ENCODE measurements at regions of chr20 and their contacts with region 1.

Region 1: DNA sequence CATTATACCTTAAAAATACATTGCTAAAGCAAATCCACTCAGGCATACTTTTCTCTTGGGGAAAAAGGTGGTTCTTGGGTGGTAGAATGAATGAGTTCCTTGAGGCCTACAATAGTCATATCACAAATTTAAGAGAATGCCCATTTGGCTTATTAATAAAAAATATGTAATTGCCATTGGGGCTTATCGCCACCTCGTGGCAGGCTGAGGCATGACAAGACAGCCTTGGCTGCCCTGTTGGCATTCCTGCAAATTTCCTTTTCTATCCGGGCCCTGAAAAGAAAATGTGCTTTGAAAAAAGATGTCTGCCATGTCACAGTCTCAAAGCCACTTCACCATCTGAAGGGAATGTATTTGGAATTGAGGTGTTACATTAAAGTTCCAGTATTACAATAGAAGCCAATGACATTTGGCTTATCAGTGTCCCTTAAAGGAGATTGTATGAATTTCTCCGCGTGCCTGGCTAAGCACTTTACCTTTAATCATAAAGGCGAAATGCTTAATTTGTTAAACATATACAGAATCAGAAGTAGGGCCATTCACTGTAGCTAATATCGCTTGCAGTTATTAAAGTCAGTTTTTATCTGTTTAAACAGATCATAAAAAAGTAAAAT is 188.3 kb upstream of the ZFP64 start:
- DNase-seq: peak in 3 of 5 donors; percentile 19 to 28 (median 23)
- H3K4me3 ChIP-seq: no peak overlapping the region
- H3K4me3 Mint-ChIP-seq: no peak overlapping the region
- H3K27ac ChIP-seq: no peak overlapping the region
- H3K27ac Mint-ChIP-seq: peak overlapping the region in 2 of 7 donors; percentile 1 to 37
- H3K4me1 ChIP-seq: peaks cover 10% of the 10 kb centered on the region
- H3K4me1 Mint-ChIP-seq: peaks cover 10 to 24% (median 13%) of the 10 kb centered on the region in 4 donors
- H3K27me3 ChIP-seq: no peaks in the 10 kb centered on the region
- H3K27me3 Mint-ChIP-seq: no peaks in the 10 kb centered on the region

Region 2: DNA sequence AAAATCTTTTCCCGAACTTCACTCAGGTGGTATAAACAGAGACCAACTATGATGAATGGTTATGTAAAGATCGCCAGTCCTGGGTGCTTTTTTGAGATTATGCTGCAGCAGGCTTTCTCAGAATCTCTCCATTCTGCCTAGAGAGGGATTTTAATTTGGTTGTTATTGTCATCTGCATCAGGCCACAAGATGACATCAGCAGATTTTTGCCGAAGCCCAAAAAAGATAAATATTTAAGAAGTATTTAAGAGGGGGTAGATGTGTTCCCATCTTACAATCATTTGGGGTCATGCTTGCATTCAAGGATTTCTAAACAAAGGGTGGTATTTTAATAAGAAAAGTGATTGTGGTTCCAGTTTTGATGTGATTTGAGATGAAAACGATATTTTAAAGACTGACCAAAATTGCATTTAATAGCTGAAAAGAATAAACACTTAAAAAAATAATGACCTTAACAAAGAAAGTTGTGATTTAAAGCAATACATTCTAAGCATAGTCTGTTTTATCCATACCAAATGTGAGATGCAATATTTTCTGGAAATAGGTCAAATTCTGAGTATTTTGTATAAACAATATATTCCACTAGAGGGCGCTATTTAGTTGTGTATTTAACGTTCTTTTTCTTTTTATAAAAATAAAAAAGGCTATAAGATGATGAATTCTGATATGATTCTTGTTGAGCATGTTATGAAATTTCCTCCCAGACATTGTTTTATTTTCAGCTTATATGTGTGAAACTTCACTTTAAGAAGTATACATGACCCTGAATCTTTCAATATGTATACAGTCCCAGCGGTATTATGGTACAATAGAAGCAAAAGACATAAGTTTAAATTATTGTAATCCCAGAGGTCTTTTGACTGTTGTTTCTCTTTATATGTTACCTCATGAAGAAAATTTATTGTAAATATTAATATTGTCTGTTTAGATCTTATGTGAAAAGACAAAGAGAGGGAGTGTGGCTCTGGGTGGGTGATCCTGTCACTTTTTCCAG is 137.3 kb before region 1 on chr20:
- CTCF ChIA-PET with region 1: no interaction called
- POLR2A ChIA-PET with region 1: no interaction called
- intact Hi-C with region 1: loop called (anchors 5 kb)
- DNase-seq: peak in 4 of 5 donors; percentile 29 to 39 (median 36)
- H3K4me3 ChIP-seq: no peak overlapping the region
- H3K4me3 Mint-ChIP-seq: no peak overlapping the region
- H3K27ac ChIP-seq: no peak overlapping the region
- H3K27ac Mint-ChIP-seq: no peak overlapping the region
- H3K4me1 ChIP-seq: no peaks in the 10 kb centered on the region
- H3K4me1 Mint-ChIP-seq: no peaks in the 10 kb centered on the region
- H3K27me3 ChIP-seq: no peaks in the 10 kb centered on the region
- H3K27me3 Mint-ChIP-seq: peaks cover 0 to 2% of the 10 kb centered on the region in 2 donors

Region 3: DNA sequence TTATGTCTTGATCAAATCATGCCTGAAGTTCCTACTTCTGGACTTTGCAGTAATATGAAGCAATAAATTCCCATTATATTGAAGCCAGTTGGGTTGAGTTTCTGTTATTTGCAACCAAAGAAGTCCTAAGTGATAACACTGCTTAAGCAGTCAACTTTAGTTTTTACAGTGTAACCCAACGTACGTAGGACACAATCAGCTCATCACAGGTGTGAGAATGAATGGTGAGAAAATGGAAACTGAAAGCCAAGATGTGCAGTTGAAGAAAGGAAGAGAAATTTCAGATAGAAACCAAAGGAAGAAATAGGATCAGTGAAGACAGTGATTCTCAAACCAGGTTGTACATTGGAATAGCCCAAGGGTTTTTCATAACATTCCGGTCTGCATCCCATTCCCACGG is 23.1 kb after region 1 on chr20:
- CTCF ChIA-PET with region 1: interaction called, 12 read pairs
- POLR2A ChIA-PET with region 1: interaction called, 5 read pairs
- intact Hi-C with region 1: no loop called
- DNase-seq: no peak
- H3K4me3 ChIP-seq: no peak overlapping the region
- H3K4me3 Mint-ChIP-seq: peak overlapping the region; percentile 2 to 74 (median 44)
- H3K27ac ChIP-seq: no peak overlapping the region
- H3K27ac Mint-ChIP-seq: peak overlapping the region; percentile 63 to 92 (median 83)
- H3K4me1 ChIP-seq: peaks cover 73% of the 10 kb centered on the region
- H3K4me1 Mint-ChIP-seq: peaks cover 57 to 82% (median 69%) of the 10 kb centered on the region in 4 donors
- H3K27me3 ChIP-seq: no peaks in the 10 kb centered on the region
- H3K27me3 Mint-ChIP-seq: no peaks in the 10 kb centered on the region

Measured in CD4-positive, alpha-beta memory T cell (primary cell).